ENCODE measurements at regions of chr2 and their contacts with region 1.

Region 1: DNA sequence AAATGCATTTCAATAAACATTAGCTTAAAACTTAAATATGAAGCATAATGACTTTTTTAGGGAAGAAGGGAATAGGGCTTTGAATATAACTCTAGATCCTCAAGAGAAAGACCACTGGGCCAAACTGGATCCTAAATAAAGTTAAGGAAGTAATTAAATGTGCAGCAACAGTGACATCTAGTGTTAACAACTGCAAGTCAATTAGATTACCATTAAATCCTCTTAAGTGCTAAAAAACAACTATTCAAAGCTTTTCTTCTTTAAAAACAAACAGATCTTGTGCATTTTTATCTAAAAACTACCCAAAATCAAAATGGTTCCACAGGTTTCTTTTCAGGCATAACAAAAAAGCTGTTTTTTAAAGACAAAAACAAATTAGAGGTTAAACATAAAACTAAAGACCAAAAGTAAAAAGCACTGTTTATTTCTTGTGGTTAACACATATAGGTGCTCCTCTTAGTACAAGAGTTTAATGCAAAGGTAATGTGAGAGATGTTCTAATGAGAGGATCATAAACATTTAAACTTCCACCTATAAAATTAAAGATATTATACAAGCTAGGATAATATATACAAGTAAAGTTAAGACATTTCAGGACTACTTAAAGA is 111.4 kb downstream of the THADA start:
- DNase-seq: peak in 2 of 4 donors; percentile 72 to 87
- ATAC-seq: peak; percentile 79
- H3K4me3 ChIP-seq: no peak overlapping the region
- H3K27ac ChIP-seq: no peak overlapping the region
- H3K4me1 ChIP-seq: peaks cover 0 to 22% of the 10 kb centered on the region in 2 donors
- H3K27me3 ChIP-seq: no peaks in the 10 kb centered on the region
- CTCF ChIP-seq: peak; percentile 46 to 57

Region 2: DNA sequence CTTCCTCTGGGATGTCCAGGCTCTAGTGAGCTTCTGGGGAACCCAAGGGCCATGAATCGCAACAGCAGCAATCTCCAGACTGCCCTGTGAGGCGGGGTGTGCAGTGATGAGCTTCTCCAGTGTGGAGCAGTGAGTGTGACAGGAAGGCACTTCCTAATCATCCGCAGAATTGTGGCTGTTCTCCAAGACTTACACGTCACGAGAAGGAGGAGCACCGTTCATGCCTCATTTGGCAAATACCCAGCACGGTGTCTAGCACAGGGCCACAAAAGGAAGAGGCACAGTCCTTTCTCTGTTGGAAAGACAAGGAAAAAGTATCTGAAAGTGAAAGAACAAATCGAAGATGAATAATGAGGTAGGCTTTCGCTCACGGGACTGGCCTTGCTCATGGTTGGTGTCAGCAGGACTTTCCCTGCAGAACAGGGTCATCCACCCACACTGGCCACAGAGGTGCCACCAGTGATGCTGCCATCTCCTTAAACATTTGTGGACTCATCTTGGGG is 567.0 kb before region 1 on chr2:
- intact Hi-C with region 1: no loop called
- DNase-seq: peak in 2 of 4 donors; percentile 55 to 86
- ATAC-seq: peak; percentile 60
- H3K4me3 ChIP-seq: no peak overlapping the region
- H3K27ac ChIP-seq: peak overlapping the region; percentile 8 to 49
- H3K4me1 ChIP-seq: peaks cover 4 to 7% of the 10 kb centered on the region in 2 donors
- H3K27me3 ChIP-seq: peaks cover 3 to 29% of the 10 kb centered on the region in 2 donors
- CTCF ChIP-seq: no peak

Region 3: DNA sequence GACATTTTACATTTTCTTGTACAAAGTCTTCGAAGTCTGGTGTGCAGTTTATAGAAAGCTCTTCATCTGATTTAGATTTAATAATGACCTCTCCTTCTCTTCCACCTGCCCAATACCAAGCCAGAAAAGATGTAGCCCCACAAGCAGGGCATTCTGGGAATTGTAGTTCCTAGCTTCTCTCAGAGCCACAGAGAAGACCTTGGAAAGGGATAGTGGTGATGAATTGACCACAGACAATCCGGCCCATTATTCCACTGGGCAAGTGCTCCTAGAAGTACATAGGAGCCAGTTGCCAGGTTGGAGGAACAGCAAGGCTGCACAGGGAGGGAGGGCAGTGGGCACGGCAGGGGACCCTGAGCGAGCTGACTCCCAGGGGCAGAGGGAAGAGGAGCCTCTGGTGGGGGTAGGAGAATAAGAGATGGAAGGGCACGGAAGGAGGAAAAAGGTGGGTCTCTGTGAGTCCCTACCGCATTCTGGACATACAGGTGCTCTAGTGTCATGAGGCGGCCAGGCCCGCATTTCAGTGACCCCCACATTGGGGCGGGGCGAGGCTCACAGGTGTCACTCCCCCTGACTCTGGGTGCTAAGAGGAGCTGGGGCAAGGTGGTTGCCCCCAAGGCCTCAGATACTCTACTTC is 539.5 kb before region 1 on chr2:
- intact Hi-C with region 1: loop called in 1 of 2 experiments (anchors 10 kb)
- DNase-seq: peak in 1 of 4 donors; percentile 53
- ATAC-seq: no peak
- H3K4me3 ChIP-seq: no peak overlapping the region
- H3K27ac ChIP-seq: no peak overlapping the region
- H3K4me1 ChIP-seq: peaks cover 8 to 20% of the 10 kb centered on the region in 2 donors
- H3K27me3 ChIP-seq: no peaks in the 10 kb centered on the region
- CTCF ChIP-seq: no peak

Region 4: GRCh38 chr2:43701111-43701510 is 216.7 kb after region 1 on chr2:
- intact Hi-C with region 1: no loop called
- DNase-seq: no peak
- ATAC-seq: no peak
- H3K4me3 ChIP-seq: no peak overlapping the region
- H3K27ac ChIP-seq: no peak overlapping the region
- H3K4me1 ChIP-seq: no peaks in the 10 kb centered on the region
- H3K27me3 ChIP-seq: no peaks in the 10 kb centered on the region
- CTCF ChIP-seq: no peak

Measured in left lung (tissue), 14 donors.